ENCODE measurements at regions of chr11 and their contacts with region 1.

Region 1: DNA sequence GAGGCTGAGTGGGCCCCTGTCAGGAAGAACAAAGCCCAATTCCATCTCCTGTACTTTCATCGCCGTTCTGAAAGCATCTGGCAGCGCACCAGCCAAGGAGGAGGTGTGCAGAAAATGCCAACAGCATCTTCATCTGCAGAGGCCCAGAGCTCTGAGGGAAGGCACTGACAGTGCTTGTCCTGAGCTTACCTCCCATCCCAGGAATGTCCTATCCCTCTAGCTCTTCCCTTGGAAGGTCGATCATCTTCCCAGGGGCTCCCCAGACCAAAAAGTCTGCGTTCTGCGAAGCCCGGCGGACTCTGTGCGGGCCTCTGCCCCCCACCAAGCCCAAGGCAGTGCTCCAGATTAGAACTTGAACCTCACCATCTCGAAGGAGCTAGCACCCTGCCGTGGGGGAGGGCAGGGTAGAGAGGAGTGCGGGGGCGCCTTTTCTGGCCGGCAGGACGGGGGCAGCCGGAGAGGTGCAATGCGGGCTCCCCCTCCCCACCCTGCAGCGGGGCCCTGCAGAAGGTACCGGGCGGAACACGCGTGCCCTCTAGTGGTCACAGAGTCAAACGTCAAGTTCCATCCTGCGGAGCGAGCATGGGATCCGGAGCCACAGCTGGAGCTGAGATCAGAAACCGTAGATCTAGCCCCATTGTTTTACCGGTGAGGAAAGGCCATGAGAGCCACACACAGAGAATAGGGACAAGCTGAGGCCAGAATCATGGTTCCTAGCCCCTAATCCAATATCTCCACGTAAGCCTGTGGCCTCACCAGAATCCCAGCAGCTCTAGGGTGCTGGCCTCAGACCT is 5.0 kb downstream of the SCN2B start:
- DNase-seq: peak; percentile 77
- ATAC-seq: peak; percentile 87
- H3K4me3 Mint-ChIP-seq: no peak overlapping the region
- H3K27ac Mint-ChIP-seq: no peak overlapping the region
- H3K4me1 Mint-ChIP-seq: peaks cover 2% of the 10 kb centered on the region
- H3K27me3 Mint-ChIP-seq: peaks cover 38% of the 10 kb centered on the region

Region 2: GRCh38 chr11:117817368-117818040 is 354.0 kb before region 1 on chr11:
- CTCF ChIA-PET with region 1: interaction called, 14 read pairs
- DNase-seq: peak; percentile 93
- ATAC-seq: peak; percentile 43
- H3K4me3 Mint-ChIP-seq: peak overlapping the region; percentile 40
- H3K27ac Mint-ChIP-seq: peak overlapping the region; percentile 98
- H3K4me1 Mint-ChIP-seq: peaks cover 69% of the 10 kb centered on the region
- H3K27me3 Mint-ChIP-seq: no peaks in the 10 kb centered on the region

Region 3: GRCh38 chr11:118133816-118134215 is 37.6 kb before region 1 on chr11:
- CTCF ChIA-PET with region 1: interaction called, 11 read pairs
- DNase-seq: no peak
- ATAC-seq: no peak
- H3K4me3 Mint-ChIP-seq: no peak overlapping the region
- H3K27ac Mint-ChIP-seq: no peak overlapping the region
- H3K4me1 Mint-ChIP-seq: peaks cover 7% of the 10 kb centered on the region
- H3K27me3 Mint-ChIP-seq: peaks cover 48% of the 10 kb centered on the region

Region 4: GRCh38 chr11:118152552-118153471 is 18.7 kb before region 1 on chr11 and contains the start of gene SCN4B:
- CTCF ChIA-PET with region 1: interaction called, 88 read pairs
- DNase-seq: no peak
- ATAC-seq: peak; percentile 70
- H3K4me3 Mint-ChIP-seq: peak within 1 kb of the TSS; percentile 54
- H3K27ac Mint-ChIP-seq: no peak within 1 kb of the TSS
- H3K4me1 Mint-ChIP-seq: peaks cover 20% of the 10 kb centered on the region
- H3K27me3 Mint-ChIP-seq: peaks cover 92% of the 10 kb centered on the region
- total RNA-seq, gene SCN4B: 0.54 TPM in 1 of 2 experiments, not detected in the other

Region 5: DNA sequence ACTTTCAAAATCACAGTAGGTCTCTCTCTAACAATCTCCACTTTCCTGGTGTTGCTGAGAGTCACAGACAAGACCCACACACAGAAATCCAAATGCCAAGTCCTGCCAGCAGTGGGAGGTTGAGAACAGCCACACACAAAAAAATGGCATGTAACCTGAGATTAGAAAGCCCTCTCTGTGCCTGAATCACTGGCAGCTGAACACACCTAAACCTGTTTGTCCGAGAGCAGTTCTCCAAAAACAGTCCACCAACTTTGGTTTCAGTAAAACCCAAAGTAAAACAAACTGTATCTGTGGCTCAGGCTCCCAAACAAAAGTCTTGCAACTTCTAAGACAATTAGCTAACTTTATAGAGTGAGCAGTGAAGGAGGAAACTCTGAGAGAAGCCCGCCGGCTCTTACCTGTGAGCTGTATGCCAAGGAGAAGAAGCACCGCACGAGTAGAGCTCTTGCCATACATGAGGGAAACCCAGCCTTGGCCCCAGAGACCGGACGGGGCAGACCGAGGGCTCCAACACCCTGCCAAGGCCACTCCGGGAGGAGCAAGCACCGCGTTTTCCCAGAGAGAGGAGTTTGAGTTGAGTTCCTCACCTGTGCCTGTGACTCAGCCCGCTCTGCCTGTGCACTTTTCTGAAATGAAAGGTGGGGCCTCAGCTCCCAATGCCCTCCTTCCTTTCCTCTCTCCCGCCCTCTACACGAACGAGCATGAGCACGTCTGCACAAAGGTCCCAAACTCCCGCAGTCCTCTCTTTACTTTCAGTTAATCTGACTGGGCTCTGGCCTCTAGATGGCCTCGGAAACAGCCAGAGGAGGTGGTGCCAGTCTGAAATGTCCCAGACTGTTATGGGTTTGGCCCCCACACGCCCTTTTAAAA is 92.5 kb after region 1 on chr11 and contains the start of gene MPZL2:
- CTCF ChIA-PET with region 1: interaction called, 11 read pairs
- DNase-seq: peak; percentile 46
- ATAC-seq: peak; percentile 53
- H3K4me3 Mint-ChIP-seq: peak within 1 kb of the TSS; percentile 69
- H3K27ac Mint-ChIP-seq: peak within 1 kb of the TSS; percentile 2
- H3K4me1 Mint-ChIP-seq: peaks cover 46% of the 10 kb centered on the region
- H3K27me3 Mint-ChIP-seq: peaks cover 16% of the 10 kb centered on the region
- total RNA-seq, gene MPZL2: 3.0 to 3.2 TPM